ENCODE measurements at regions of chr1 and their contacts with region 1.

Region 1: GRCh38 chr1:220690140-220691025 is at the start of gene C1orf115:
- DNase-seq: peak; percentile 75 to 91
- ATAC-seq: peak; percentile 95
- H3K4me3 ChIP-seq: peak within 1 kb of the TSS; percentile 28 to 56
- H3K27ac ChIP-seq: no peak within 1 kb of the TSS
- H3K4me1 ChIP-seq: no peaks in the 10 kb centered on the region
- H3K27me3 ChIP-seq: no peaks in the 10 kb centered on the region
- total RNA-seq, gene C1orf115: 10.8 to 21.2 TPM

Region 2: GRCh38 chr1:220669005-220669404 is 21.4 kb before region 1 on chr1:
- intact Hi-C with region 1: no loop called
- DNase-seq: no peak
- ATAC-seq: no peak
- H3K4me3 ChIP-seq: no peak overlapping the region
- H3K27ac ChIP-seq: no peak overlapping the region
- H3K4me1 ChIP-seq: no peaks in the 10 kb centered on the region
- H3K27me3 ChIP-seq: no peaks in the 10 kb centered on the region

Region 3: DNA sequence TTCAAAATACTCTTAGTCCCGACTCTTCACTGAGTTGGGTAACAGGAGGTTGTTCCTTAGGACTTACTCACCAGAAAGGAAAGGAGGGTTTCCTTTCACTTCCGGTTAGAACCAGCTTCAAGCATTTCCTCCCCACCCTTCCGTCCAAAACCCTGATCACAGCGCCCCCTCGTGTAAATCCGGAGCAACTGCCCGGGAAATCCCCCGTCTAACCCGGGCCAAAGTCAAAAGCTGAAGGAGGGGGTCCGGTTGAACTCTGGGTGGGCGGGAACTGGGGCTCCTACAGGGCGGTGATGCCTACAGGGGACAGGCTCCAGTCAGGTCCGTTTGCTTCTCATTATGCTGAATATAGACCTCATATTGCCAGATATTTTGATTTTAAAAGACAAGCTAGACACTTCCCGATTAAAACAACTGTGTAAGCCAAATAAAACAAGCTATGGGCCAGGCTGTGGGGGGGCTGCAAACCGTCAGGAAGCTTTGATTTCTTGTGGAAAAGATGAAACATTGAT is 42.8 kb after region 1 on chr1:
- intact Hi-C with region 1: loop called (anchors 2 to 5 kb)
- DNase-seq: peak; percentile 87 to 92
- ATAC-seq: peak; percentile 95
- H3K4me3 ChIP-seq: peak overlapping the region; percentile 2 to 28
- H3K27ac ChIP-seq: no peak overlapping the region
- H3K4me1 ChIP-seq: no peaks in the 10 kb centered on the region
- H3K27me3 ChIP-seq: no peaks in the 10 kb centered on the region

Region 4: DNA sequence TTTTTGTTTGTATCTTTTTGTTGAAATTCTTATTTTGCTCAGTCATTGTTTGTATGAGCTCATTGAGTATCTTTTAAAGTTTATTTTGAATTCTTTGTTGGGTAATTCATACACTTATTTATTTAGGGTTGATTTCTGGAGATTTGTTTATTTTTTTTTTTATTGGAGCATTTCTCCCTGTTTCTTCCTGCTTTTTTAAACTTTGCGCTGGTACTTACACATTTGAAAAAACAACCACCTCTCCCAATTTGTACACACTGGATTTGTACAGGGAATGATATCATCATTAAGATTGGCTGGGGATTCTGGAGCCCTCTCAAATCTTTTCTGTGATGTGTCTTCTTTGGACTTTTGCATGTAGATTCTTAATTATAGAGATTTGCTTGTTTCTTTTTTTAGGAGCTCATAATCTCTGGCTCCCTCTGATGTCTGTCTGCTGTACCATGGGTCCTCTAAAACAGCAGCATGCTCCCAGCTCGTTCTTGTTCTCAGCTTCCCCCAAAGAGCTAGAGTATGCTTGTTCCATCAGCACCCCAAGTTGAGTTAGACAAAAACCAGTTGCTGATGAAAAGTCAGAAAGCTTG is 740.8 kb after region 1 on chr1:
- intact Hi-C with region 1: no loop called
- DNase-seq: no peak
- ATAC-seq: peak; percentile 60
- H3K4me3 ChIP-seq: no peak overlapping the region
- H3K27ac ChIP-seq: no peak overlapping the region
- H3K4me1 ChIP-seq: no peaks in the 10 kb centered on the region
- H3K27me3 ChIP-seq: no peaks in the 10 kb centered on the region

Measured in aorta (tissue), 5 donors.